AG04449 (cell line): ENCODE measurements at regions of chr4 and their contacts with region 1.

Region 1: DNA sequence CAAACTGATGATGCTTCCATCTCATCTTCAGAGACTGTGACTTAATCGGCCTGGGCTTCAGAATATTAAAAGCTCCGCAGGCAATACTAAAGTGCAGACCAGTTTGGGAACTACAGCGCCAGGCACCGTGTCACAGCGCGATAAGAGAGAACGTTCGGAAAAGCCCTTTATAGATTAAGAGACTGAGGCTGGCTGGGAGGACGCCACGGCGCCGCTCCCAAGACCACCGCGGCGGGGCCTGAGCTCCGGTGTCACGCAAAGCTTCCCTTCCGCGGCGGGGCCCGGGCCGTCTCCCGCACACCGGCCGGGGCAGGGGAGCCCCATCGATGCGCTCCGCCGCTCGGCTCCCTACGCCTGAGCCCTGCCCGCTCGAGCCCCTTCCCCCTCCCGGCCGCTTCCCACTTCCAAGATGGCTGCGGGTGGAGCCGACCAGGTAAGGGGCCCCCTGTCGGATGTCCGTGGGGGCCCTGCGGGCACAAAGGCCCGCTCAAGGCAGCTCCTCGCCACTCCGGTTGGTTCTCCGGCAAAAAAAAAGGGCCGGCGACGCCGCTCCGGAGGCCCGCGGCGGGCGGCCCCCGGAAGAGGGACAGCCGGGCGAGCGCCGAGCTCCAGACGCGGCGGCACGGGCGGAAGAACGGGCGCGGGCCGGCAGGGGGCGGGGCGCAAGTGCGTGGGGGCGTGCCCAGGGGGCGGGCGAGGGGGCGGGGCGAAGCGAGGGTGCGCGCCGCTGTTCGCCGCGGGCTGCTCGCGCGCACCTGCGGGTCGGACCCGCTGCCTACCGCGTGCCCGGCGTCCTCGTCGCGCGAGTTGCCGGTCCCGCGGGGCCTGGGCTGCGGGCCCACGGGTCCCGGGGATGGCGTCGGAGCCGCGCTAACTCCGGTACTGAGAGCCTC is at the start of gene TBC1D14:
- DNase-seq: no peak
- H3K4me3 ChIP-seq: peak within 1 kb of the TSS; percentile 71
- CTCF ChIP-seq: peak; percentile 21

Region 2: GRCh38 chr4:6885951-6886557 is 23.3 kb before region 1 on chr4:
- CTCF ChIA-PET with region 1: interaction called, 17 read pairs
- POLR2A ChIA-PET with region 1: interaction called, 5 read pairs
- DNase-seq: no peak
- H3K4me3 ChIP-seq: peak overlapping the region; percentile 23; the same call in 1 of the 2 replicates
- CTCF ChIP-seq: peak; percentile 39

Region 3: GRCh38 chr4:6986781-6987587 is 77.7 kb after region 1 on chr4:
- CTCF ChIA-PET with region 1: interaction called, 14 read pairs
- POLR2A ChIA-PET with region 1: interaction called, 10 read pairs
- DNase-seq: no peak
- H3K4me3 ChIP-seq: peak overlapping the region; percentile 98
- CTCF ChIP-seq: no peak